ENCODE measurements at regions of chr3 and their contacts with region 1.

Region 1: GRCh38 chr3:183884427-183885296 is at the start of gene PARL:
- DNase-seq: peak; percentile 93
- H3K4me3 ChIP-seq: peak within 1 kb of the TSS; percentile 81 to 84
- H3K27ac ChIP-seq: peak within 1 kb of the TSS; percentile 73 to 74
- H3K4me1 ChIP-seq: no peaks in the 10 kb centered on the region
- H3K27me3 ChIP-seq: no peaks in the 10 kb centered on the region
- CTCF ChIP-seq: peak; percentile 88 to 97 (median 96)
- POLR2A ChIP-seq: peak; percentile 49
- total RNA-seq, gene PARL: 31.5 to 44.3 TPM

Region 2: DNA sequence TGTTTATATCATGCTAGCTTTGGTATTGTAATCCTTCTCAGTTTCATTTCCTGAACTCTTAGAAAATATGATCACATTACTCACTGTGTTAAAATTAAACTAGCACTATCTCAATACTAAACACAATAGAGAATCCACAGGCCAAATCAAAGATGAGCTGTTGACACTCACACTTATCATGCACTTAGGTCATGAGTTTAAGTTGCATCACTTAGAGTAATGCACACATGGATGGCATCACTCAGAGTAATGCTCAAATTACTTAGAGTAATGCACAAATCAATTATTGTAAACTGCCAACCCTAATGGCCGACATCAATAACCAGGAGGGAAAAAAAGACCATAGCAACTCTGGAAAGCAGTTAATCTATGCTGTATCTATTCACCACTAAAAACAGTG is 416.2 kb before region 1 on chr3:
- intact Hi-C with region 1: loop called (anchors 5 kb)
- DNase-seq: no peak
- H3K4me3 ChIP-seq: no peak overlapping the region
- H3K27ac ChIP-seq: no peak overlapping the region
- H3K4me1 ChIP-seq: no peaks in the 10 kb centered on the region
- H3K27me3 ChIP-seq: no peaks in the 10 kb centered on the region
- CTCF ChIP-seq: no peak
- POLR2A ChIP-seq: no peak

Region 3: GRCh38 chr3:183564046-183564445 is 320.6 kb before region 1 on chr3:
- intact Hi-C with region 1: no loop called
- DNase-seq: no peak
- H3K4me3 ChIP-seq: no peak overlapping the region
- H3K27ac ChIP-seq: no peak overlapping the region
- H3K4me1 ChIP-seq: no peaks in the 10 kb centered on the region
- H3K27me3 ChIP-seq: no peaks in the 10 kb centered on the region
- CTCF ChIP-seq: no peak
- POLR2A ChIP-seq: no peak

Region 4: GRCh38 chr3:183937610-183938230 is 53.1 kb after region 1 on chr3:
- intact Hi-C with region 1: no loop called
- DNase-seq: no peak
- H3K4me3 ChIP-seq: no peak overlapping the region
- H3K27ac ChIP-seq: no peak overlapping the region
- H3K4me1 ChIP-seq: no peaks in the 10 kb centered on the region
- H3K27me3 ChIP-seq: no peaks in the 10 kb centered on the region
- CTCF ChIP-seq: no peak
- POLR2A ChIP-seq: no peak